AG04449 (cell line): ENCODE measurements at regions of chr4 and their contacts with region 1.

Region 1: GRCh38 chr4:102826890-102827673 is at the start of gene UBE2D3:
- DNase-seq: peak; percentile 84
- H3K4me3 ChIP-seq: peak within 1 kb of the TSS; percentile 86
- CTCF ChIP-seq: no peak

Region 2: GRCh38 chr4:102760645-102761295 is 66.3 kb before region 1 on chr4 and contains the start of gene MANBA:
- CTCF ChIA-PET with region 1: no interaction called
- POLR2A ChIA-PET with region 1: interaction called, 11 read pairs
- DNase-seq: no peak
- H3K4me3 ChIP-seq: peak within 1 kb of the TSS; percentile 94
- CTCF ChIP-seq: no peak

Region 3: DNA sequence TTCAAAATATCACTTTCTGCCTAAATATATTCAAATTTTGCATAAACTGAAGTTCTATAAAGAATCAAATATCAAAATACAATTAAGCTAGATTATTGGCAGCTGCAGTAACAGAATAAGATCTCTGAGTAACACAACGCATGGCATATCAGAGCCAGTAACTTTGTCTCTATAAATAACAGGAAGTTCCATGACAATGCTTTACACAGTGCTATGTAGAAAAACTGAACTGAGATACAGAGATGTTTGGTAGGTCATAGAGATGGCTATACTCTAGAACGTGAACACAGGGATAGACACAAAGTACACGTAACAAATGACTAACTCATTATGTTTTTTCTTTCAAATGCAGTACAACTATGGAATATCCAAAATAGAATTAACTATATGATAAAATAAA is 17.9 kb before region 1 on chr4:
- CTCF ChIA-PET with region 1: interaction called, 10 read pairs
- POLR2A ChIA-PET with region 1: interaction called, 6 read pairs
- DNase-seq: no peak
- H3K4me3 ChIP-seq: no peak overlapping the region
- CTCF ChIP-seq: no peak

Region 4: GRCh38 chr4:102815981-102816380 is 11.1 kb before region 1 on chr4:
- CTCF ChIA-PET with region 1: interaction called, 21 read pairs
- POLR2A ChIA-PET with region 1: interaction called, 54 read pairs
- DNase-seq: peak; percentile 53
- H3K4me3 ChIP-seq: no peak overlapping the region
- CTCF ChIP-seq: no peak

Region 5: DNA sequence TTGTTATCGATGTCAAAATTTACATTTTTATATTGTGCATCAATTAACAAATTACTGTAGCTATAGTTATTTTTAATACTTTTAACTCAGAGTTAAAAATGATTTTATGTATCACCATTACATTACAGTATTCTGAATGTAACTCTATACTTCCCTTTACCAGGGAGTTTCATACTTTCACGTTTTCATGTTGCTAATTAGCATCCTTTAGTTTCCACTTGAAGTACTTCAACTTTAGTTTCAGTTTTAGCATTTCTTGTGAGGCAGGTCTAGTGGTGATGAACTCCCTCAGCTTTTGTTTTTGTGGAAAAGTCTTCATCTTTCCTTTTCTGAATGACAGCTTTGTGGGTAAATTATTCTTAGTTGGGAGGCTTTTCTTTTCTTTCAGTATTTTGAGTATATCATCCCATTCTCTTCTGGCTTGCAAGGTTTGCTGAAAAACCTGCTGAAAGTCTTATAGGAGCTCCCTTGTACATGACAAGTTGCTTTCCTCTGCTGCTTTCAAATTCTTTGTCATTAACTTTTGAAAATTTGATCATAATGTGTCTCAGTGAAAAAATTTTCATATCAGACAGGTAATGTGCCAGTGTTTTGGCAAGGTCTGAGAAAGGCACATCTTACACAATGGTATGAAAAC is 31.9 kb after region 1 on chr4:
- CTCF ChIA-PET with region 1: no interaction called
- POLR2A ChIA-PET with region 1: no interaction called
- DNase-seq: no peak
- H3K4me3 ChIP-seq: no peak overlapping the region
- CTCF ChIP-seq: no peak

Region 6: GRCh38 chr4:102868781-102869568 is 41.9 kb after region 1 on chr4 and contains the start of gene CISD2:
- CTCF ChIA-PET with region 1: interaction called, 3 read pairs
- POLR2A ChIA-PET with region 1: interaction called, 41 read pairs
- DNase-seq: no peak
- H3K4me3 ChIP-seq: peak within 1 kb of the TSS; percentile 81
- CTCF ChIP-seq: no peak